A549 (cell line): ENCODE measurements at regions of chr17 and their contacts with region 1.

Region 1: DNA sequence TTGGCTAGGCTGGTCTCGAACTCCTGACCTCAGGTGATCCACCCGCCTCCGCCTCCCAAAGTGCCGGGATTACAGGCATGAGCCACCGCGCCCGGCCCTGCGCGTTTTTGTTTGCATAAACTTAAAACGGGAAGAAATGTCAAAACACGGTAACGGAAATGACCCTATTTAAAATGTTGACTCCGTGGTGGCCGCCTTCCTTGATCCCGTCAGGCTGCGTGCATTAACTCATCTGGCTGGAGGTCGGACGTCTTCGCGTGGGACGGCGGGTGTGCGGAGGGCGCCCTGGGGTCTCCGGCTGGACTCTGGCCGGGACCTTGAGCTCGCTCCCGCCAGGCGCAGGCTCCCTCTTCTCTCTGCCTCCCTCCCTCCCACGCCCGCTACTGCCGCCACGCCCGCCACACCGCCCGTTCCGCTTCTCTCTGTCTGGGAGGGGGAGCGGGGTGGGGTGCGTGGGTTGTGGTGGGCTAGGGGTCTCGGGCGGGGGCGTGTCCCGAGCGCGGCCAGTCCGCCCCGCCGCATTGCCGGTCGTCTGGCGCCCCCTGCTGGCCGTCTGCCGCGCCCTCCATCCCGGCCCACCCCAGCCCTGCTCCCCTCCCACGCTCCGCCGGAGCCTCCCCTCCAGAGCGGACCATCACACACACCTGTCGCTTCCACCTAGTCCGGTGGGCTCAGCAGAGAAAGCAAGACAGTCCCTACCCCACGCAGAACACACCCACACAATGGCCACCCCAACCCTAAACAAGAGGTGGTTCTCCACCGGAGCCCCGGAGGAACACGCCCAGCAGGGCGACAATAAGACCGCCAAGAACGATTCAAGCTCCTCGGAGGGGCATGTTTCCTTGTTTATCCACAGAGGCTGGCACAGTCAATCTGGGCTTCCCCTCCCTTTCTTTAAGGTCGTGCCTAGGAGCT is 1.2 kb upstream of the CCDC42 start:
- DNase-seq: peak; percentile 68 to 85
- ATAC-seq: peak; percentile 85 to 95
- H3K4me3 ChIP-seq: peak overlapping the region; percentile 54
- H3K27ac ChIP-seq: peak overlapping the region; percentile 12 to 69; a peak in 5 of 6 replicates
- H3K4me1 ChIP-seq: no peaks in the 10 kb centered on the region; the same call in 2 of the 3 replicates
- CTCF ChIP-seq: peak; percentile 99
- EP300 ChIP-seq: no peak
- POLR2A ChIP-seq: no peak
- RAD21 ChIP-seq: peak; percentile 85 to 100

Region 2: DNA sequence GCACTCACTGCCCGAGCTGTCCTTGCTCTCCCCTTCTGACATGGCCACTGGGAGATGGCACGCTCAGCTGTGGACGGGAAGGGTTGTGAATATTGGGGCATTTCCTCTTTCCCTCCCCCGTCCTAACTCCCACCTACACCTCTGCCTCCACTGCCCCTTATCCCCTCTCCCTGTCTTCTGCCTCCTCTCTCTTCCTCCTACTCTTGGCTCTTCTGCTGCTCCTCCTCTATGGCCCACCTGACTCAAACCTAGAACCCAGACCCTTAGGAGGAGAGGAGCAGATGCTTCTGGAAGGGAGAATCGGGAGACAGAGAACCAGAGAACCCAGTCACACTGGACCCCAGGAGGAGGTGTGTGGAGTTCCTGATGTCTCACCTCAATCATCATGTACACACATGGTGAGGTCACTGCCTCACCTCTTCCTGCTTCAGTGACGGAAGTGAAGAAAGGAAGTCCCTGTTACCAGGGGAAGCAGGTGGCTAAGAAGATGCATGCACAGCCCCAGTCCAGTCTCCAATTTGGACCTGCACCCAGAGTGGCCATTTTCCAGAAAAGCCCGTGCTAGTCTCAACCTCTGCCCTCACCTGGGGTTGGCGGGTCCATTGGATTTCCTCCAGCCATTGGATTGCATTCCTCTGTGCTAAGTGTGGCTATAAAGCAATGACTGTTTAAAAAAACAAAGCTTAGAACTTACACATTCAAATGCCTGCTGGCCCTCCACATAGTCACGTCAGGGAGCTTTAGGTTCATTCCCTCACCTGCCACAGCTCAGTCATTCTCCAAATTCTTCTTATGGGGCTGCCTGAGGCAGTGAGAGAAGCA is 352.2 kb before region 1 on chr17:
- CTCF ChIA-PET with region 1: interaction called, 82 read pairs
- POLR2A ChIA-PET with region 1: no interaction called
- DNase-seq: no peak
- ATAC-seq: peak in 1 of 2 experiments; percentile 14; a peak in 2 of 6 replicates
- H3K4me3 ChIP-seq: no peak overlapping the region
- H3K27ac ChIP-seq: no peak overlapping the region
- H3K4me1 ChIP-seq: peaks cover 6% of the 10 kb centered on the region; the same call in 1 of the 3 replicates
- CTCF ChIP-seq: no peak
- EP300 ChIP-seq: no peak
- POLR2A ChIP-seq: no peak
- RAD21 ChIP-seq: no peak

Region 3: GRCh38 chr17:8420041-8420934 is 325.6 kb before region 1 on chr17:
- CTCF ChIA-PET with region 1: interaction called, 112 read pairs
- POLR2A ChIA-PET with region 1: no interaction called
- DNase-seq: peak in 1 of 2 experiments; percentile 85
- ATAC-seq: peak; percentile 79 to 81
- H3K4me3 ChIP-seq: no peak overlapping the region
- H3K27ac ChIP-seq: peak overlapping the region in 1 of 2 experiments; percentile 5; a peak in 2 of 6 replicates
- H3K4me1 ChIP-seq: peaks cover 43% of the 10 kb centered on the region
- CTCF ChIP-seq: no peak
- EP300 ChIP-seq: peak in 1 of 2 experiments; percentile 43; a peak in 1 of 5 replicates
- POLR2A ChIP-seq: no peak
- RAD21 ChIP-seq: no peak

Region 4: DNA sequence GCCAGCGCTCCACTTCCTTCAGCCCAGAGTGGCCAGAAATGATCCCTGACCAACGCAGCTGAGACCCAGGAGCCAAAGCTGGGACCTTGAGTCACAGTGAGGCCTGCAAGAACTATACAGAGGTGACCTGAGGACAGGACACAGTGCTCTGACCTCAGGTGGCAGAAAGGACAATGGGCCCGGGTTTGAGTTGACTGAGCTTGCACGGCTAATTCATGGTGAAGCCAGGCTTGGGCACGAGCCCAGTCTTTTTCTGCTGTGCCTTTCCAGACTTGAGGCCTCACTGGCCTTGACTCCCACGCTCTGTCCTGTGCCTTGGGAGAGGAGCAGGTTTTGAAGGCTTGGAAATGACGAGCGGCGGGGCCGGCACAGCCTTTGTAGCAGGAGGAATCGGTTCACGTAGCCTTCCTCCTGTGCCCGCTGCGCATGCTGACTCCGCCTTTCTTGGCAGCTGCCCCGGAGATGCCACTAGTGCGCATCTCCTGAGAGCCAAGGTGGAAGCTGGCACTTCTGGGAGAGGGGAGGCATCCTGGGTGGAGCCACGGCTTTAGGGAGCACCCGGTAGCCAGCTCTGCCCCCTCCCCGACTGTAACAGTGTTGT is 275.3 kb before region 1 on chr17:
- CTCF ChIA-PET with region 1: interaction called, 12 read pairs
- POLR2A ChIA-PET with region 1: no interaction called
- DNase-seq: no peak
- ATAC-seq: peak in 1 of 2 experiments; percentile 14; a peak in 2 of 6 replicates
- H3K4me3 ChIP-seq: no peak overlapping the region
- H3K27ac ChIP-seq: no peak overlapping the region
- H3K4me1 ChIP-seq: no peaks in the 10 kb centered on the region
- CTCF ChIP-seq: no peak
- EP300 ChIP-seq: no peak
- POLR2A ChIP-seq: no peak
- RAD21 ChIP-seq: no peak

Region 5: GRCh38 chr17:8630802-8631553 is 114.9 kb before region 1 on chr17:
- CTCF ChIA-PET with region 1: interaction called, 13 read pairs
- POLR2A ChIA-PET with region 1: no interaction called
- DNase-seq: peak; percentile 100
- ATAC-seq: peak; percentile 95 to 98
- H3K4me3 ChIP-seq: peak overlapping the region; percentile 95
- H3K27ac ChIP-seq: peak overlapping the region; percentile 94 to 95
- H3K4me1 ChIP-seq: peaks cover 13% of the 10 kb centered on the region
- CTCF ChIP-seq: 0 out of 3 replicates have a peak, but pooled peaks have one; percentile 13
- EP300 ChIP-seq: no peak
- POLR2A ChIP-seq: peak; percentile 64; the same call in 1 of the 2 replicates
- RAD21 ChIP-seq: 0 out of 5 replicates have a peak, but pooled peaks of 1 of the 2 experiments have one; percentile 21

Region 6: GRCh38 chr17:8732406-8733085 is 13.3 kb before region 1 on chr17:
- CTCF ChIA-PET with region 1: interaction called, 12 read pairs
- POLR2A ChIA-PET with region 1: interaction called, 3 read pairs
- DNase-seq: no peak
- ATAC-seq: 0 out of 6 replicates have a peak, but pooled peaks of 1 of the 2 experiments have one; percentile 16
- H3K4me3 ChIP-seq: no peak overlapping the region
- H3K27ac ChIP-seq: no peak overlapping the region
- H3K4me1 ChIP-seq: no peaks in the 10 kb centered on the region
- CTCF ChIP-seq: no peak
- EP300 ChIP-seq: no peak
- POLR2A ChIP-seq: no peak
- RAD21 ChIP-seq: no peak

Region 7: GRCh38 chr17:8785547-8786413 is 39.9 kb after region 1 on chr17:
- CTCF ChIA-PET with region 1: interaction called, 45 read pairs
- POLR2A ChIA-PET with region 1: no interaction called
- DNase-seq: peak; percentile 69 to 72
- ATAC-seq: peak; percentile 87 to 98
- H3K4me3 ChIP-seq: no peak overlapping the region
- H3K27ac ChIP-seq: no peak overlapping the region
- H3K4me1 ChIP-seq: no peaks in the 10 kb centered on the region
- CTCF ChIP-seq: peak; percentile 85
- EP300 ChIP-seq: no peak
- POLR2A ChIP-seq: no peak
- RAD21 ChIP-seq: peak; percentile 88 to 91